ENCODE measurements at regions of chr5 and their contacts with region 1.

Region 1: DNA sequence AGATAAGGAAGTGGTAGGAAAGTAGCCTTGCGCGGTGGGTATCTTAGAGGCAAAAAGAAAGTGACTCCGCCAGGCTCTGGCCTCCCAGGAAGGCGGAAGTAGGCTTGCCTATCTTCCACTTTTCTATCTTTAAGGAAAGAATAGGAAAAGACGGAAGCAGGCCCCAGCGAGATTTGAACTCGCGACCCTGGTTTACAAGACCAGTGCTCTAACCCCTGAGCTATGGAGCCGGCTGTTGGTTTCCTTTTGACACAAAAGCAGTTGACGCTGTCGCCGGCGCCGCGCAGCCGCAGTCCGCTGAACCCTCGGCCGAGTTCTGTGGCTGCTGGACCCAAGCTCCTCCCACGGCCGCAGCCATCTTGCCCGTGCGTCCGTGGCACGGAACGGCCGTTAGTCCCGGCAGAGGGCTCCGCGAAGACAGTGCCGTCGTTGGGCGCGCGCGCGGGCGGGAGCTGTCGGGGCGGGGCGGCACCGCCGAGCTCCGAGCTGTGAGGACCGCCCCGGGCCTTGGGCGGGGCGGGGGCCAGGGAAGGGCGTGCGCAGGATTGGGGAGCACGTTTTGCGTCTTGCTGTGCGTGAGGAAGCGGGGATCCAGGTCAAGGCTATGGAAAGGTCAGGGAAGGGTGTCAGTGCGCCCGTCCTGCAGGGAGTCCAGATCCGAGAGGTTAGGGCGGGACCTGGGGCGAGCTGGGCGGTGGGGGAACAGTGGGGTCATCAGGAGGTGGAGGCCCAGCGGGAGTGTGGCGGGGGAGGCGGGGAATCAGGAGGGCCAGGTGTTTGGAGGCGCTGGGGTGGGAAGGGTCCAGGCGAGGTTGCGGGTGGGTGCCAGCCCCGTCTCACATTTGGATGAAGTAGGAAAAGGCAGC is 13.2 kb downstream of the TRIM7 start:
- DNase-seq: peak; percentile 83
- ATAC-seq: peak; percentile 74
- H3K4me3 ChIP-seq: peak overlapping the region; percentile 95
- H3K27ac ChIP-seq: peak overlapping the region; percentile 72
- H3K4me1 ChIP-seq: peaks cover 6% of the 10 kb centered on the region
- H3K27me3 ChIP-seq: no peaks in the 10 kb centered on the region
- CTCF ChIP-seq: no peak
- EP300 ChIP-seq: peak in 1 of 2 experiments; percentile 85; a peak in 1 of 4 replicates
- POLR2A ChIP-seq: peak; percentile 91
- RAD21 ChIP-seq: no peak

Region 2: GRCh38 chr5:181167814-181168488 is 23.8 kb before region 1 on chr5:
- CTCF ChIA-PET with region 1: interaction called, 16 read pairs
- POLR2A ChIA-PET with region 1: interaction called, 20 read pairs
- RAD21 ChIA-PET with region 1: interaction called, 8 read pairs
- SMC1A ChIA-PET with region 1: interaction called, 10 read pairs
- in situ Hi-C with region 1: no loop called
- intact Hi-C with region 1: loop called (anchors 1 kb)
- DNase-seq: no peak
- ATAC-seq: peak; percentile 43
- H3K4me3 ChIP-seq: no peak overlapping the region
- H3K27ac ChIP-seq: no peak overlapping the region
- H3K4me1 ChIP-seq: peaks cover 32% of the 10 kb centered on the region
- H3K27me3 ChIP-seq: no peaks in the 10 kb centered on the region
- CTCF ChIP-seq: peak; percentile 54 to 61 (median 54)
- EP300 ChIP-seq: no peak
- POLR2A ChIP-seq: no peak
- RAD21 ChIP-seq: peak; percentile 26; the same call in 1 of the 2 replicates

Region 3: DNA sequence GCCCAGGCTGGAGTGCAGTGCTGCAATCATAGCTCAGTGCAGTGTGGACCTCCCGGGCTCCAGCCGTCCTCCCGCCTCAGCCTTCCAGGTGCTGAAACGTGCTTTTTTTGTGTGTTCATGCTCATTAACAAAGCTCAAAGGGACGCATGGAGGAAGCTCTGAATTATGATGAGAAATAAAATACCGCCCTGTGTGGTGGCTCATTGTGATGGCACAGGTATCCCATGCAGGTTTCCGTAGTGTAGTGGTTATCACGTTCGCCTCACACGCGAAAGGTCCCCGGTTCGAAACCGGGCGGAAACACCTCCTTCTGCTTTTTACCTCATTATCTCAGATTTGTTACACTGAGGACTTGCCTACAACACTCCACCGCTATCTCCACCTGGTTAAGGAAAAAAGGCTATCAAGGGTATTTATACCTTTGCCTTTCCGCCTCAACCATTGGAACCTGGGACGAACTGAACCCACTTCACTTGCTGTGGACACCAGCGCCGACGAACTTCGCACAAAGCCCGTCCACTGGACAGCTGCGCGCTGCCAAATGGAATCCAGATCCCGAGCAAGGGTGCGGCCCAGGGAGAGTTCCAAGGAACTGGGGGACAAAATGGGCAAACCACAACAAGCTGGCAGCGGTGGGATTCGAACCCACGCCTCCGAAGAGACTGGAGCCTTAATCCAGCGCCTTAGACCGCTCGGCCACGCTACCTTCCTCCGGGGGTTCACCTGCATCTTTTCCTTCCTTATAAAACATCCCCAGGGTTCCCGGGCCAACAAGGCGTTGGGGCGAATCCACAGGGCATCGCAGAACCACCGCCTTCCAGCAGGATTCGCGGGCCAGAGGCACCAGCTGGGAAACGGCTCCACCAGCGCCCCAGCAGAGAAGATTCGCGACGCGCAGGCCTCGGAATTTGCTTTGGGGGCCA is 18.1 kb before region 1 on chr5:
- CTCF ChIA-PET with region 1: interaction called, 16 read pairs
- POLR2A ChIA-PET with region 1: interaction called, 20 read pairs
- RAD21 ChIA-PET with region 1: interaction called, 8 read pairs
- SMC1A ChIA-PET with region 1: interaction called, 10 read pairs
- in situ Hi-C with region 1: no loop called
- intact Hi-C with region 1: loop called (anchors 1 kb)
- DNase-seq: peak; percentile 84
- ATAC-seq: peak; percentile 77
- H3K4me3 ChIP-seq: peak overlapping the region; percentile 66
- H3K27ac ChIP-seq: peak overlapping the region; percentile 53
- H3K4me1 ChIP-seq: peaks cover 20% of the 10 kb centered on the region
- H3K27me3 ChIP-seq: no peaks in the 10 kb centered on the region
- CTCF ChIP-seq: no peak
- EP300 ChIP-seq: no peak
- POLR2A ChIP-seq: no peak
- RAD21 ChIP-seq: no peak

Region 4: DNA sequence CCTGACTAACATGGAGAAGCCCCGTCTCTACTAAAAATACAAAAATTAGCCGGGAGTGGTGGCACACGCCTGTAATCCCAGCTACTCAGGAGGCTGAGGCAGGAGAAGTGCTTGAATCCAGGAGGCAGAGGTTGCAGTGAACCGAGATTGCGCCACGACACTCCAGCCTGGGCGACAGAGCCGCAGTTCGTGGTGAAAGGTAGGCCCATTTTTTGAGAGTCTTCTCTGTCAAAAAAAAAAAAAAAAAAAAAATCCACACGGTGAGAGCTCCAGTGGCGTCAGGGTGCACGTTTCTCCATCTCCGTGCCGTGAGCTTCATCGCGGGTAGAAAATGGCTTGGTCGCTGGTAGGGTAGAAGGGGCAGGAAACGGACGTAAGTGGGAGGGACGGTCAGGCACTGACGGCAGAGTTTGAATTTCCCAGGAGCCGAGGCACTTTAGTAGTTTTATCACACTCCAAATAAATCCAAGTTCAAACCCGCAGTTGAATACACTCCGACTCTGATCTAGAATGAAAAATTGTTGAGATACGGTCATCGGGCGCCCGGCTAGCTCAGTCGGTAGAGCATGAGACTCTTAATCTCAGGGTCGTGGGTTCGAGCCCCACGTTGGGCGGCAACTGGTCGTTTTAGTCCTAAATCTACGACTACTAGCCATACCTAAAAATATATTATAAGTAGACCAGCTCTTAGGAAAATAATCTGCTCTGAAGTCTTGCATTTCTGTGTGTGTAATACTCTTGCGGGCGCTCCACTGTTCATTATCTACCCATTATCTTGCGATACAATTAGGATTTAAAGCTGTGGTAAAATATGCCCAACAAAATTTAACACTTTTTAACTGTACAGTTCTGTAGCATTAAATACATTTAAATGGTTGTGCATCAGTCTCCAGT is 15.7 kb after region 1 on chr5:
- CTCF ChIA-PET with region 1: interaction called, 96 read pairs
- POLR2A ChIA-PET with region 1: interaction called, 41 read pairs
- RAD21 ChIA-PET with region 1: interaction called, 72 read pairs
- SMC1A ChIA-PET with region 1: interaction called, 40 read pairs
- in situ Hi-C with region 1: no loop called
- intact Hi-C with region 1: loop called (anchors 1 kb)
- DNase-seq: no peak
- ATAC-seq: peak; percentile 59
- H3K4me3 ChIP-seq: peak overlapping the region; percentile 83
- H3K27ac ChIP-seq: peak overlapping the region; percentile 51
- H3K4me1 ChIP-seq: peaks cover 14% of the 10 kb centered on the region
- H3K27me3 ChIP-seq: peaks cover 4 to 8% of the 10 kb centered on the region in 2 experiments; a peak in 3 of 4 replicates
- CTCF ChIP-seq: no peak
- EP300 ChIP-seq: no peak
- POLR2A ChIP-seq: no peak
- RAD21 ChIP-seq: no peak

Region 5: GRCh38 chr5:181223058-181223728 is 31.4 kb after region 1 on chr5 and contains the start of gene TRIM41:
- CTCF ChIA-PET with region 1: interaction called, 3 read pairs
- POLR2A ChIA-PET with region 1: interaction called, 10 read pairs
- RAD21 ChIA-PET with region 1: interaction called, 25 read pairs
- SMC1A ChIA-PET with region 1: interaction called, 10 read pairs
- in situ Hi-C with region 1: no loop called
- intact Hi-C with region 1: loop called (anchors 1 kb)
- DNase-seq: peak; percentile 94
- ATAC-seq: peak; percentile 77
- H3K4me3 ChIP-seq: peak within 1 kb of the TSS; percentile 98
- H3K27ac ChIP-seq: peak within 1 kb of the TSS; percentile 95
- H3K4me1 ChIP-seq: peaks cover 20% of the 10 kb centered on the region
- H3K27me3 ChIP-seq: no peaks in the 10 kb centered on the region
- CTCF ChIP-seq: peak in 1 of 3 experiments; percentile 12; a peak in 1 of 6 replicates
- EP300 ChIP-seq: no peak
- POLR2A ChIP-seq: peak; percentile 98
- RAD21 ChIP-seq: no peak
- polyA plus RNA-seq, gene TRIM41: 1.0 to 3.2 TPM

Region 6: GRCh38 chr5:181243512-181244343 is 52.0 kb after region 1 on chr5 and contains the start of gene RACK1:
- CTCF ChIA-PET with region 1: interaction called, 3 read pairs
- POLR2A ChIA-PET with region 1: interaction called, 15 read pairs
- RAD21 ChIA-PET with region 1: interaction called, 5 read pairs
- SMC1A ChIA-PET with region 1: no interaction called
- in situ Hi-C with region 1: no loop called
- intact Hi-C with region 1: loop called (anchors 1 kb)
- DNase-seq: peak; percentile 89
- ATAC-seq: peak; percentile 66
- H3K4me3 ChIP-seq: peak within 1 kb of the TSS; percentile 98
- H3K27ac ChIP-seq: peak within 1 kb of the TSS; percentile 92
- H3K4me1 ChIP-seq: peaks cover 27% of the 10 kb centered on the region
- H3K27me3 ChIP-seq: no peaks in the 10 kb centered on the region
- CTCF ChIP-seq: no peak
- EP300 ChIP-seq: no peak
- POLR2A ChIP-seq: peak; percentile 99
- RAD21 ChIP-seq: no peak
- polyA plus RNA-seq, gene RACK1: 3,729 to 5,412 TPM

Region 7: DNA sequence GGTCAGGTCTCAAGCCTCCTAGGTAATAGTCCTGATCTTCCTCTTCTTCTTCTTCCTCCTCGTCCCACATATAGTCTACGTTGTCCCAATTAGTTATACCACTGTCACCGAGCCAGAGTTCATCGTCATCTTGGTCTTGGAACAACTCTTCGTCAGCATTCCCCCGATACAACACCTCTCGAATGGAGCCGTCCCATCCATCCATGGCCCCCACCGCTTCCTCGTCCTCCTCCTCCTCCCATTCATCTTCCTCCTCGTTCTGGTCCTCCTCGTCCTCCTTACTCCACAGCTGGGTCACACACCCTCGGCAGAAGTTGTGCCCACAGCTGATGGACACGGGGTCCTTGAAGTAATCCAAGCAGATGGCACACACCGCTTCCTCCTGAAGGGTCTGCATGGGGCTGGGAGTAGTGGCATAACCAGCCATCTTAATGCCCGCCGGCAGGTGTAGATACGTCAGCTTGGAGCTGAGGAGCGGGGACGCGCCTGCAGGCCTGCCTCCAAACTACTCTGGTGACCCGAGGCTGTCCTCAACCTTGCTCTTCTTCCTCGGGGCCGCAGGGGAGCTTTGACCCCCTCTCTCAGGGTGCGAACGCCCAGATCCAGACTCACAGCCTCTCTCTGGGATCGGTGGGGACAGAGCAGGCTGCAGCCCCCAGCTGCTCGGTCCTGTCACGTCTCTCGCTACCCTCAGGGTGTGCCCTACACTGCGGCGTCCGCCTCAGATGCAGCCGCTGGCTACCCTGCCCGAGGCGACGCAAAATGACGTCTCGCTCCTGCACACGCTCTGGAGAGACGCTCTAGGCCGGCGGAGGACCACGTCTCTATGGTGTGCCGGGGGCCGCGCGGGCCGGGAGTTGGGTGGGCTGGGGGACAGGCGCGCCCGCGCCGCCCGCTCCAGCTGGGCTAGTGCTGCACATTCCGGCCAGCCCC is 68.9 kb after region 1 on chr5 and contains the start of gene TRIM52:
- CTCF ChIA-PET with region 1: interaction called, 7 read pairs
- POLR2A ChIA-PET with region 1: interaction called, 4 read pairs
- RAD21 ChIA-PET with region 1: interaction called, 6 read pairs
- SMC1A ChIA-PET with region 1: interaction called, 5 read pairs
- in situ Hi-C with region 1: loop called (anchors 10 kb)
- intact Hi-C with region 1: loop called (anchors 2 kb)
- DNase-seq: peak; percentile 77
- ATAC-seq: peak; percentile 92
- H3K4me3 ChIP-seq: peak within 1 kb of the TSS; percentile 95
- H3K27ac ChIP-seq: peak within 1 kb of the TSS; percentile 97
- H3K4me1 ChIP-seq: peaks cover 3% of the 10 kb centered on the region; the same call in 1 of the 2 replicates
- H3K27me3 ChIP-seq: no peaks in the 10 kb centered on the region
- CTCF ChIP-seq: peak in 1 of 3 experiments; percentile 19; a peak in 1 of 6 replicates
- EP300 ChIP-seq: no peak
- POLR2A ChIP-seq: peak; percentile 99
- RAD21 ChIP-seq: no peak
- polyA plus RNA-seq, gene TRIM52: 1.4 to 3.4 TPM